ENCODE measurements at regions of chr16 and their contacts with region 1.

Region 1: DNA sequence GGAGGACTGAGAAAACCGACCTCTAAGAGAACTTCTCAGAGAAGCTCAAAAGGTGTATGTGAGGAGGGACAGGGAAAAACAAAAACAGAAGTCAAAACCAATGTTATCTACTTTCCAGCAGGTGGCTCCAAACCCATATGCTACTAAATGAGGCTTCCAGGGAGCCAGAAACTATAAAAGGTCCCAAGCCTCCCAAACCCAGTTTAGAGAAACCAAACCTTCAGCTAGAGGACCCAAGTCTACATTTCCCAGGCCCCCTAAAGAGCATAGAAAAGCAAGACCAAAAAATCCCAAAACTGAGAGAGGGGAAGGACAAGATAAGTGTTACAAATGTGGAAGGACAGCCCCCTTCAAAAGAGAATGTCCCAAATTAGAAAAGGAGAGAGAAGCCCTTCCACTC is 3.7 kb downstream of the HPR start:
- DNase-seq: peak; percentile 64
- ATAC-seq: peak; percentile 86
- H3K4me3 ChIP-seq: no peak overlapping the region
- H3K27ac ChIP-seq: no peak overlapping the region
- H3K4me1 ChIP-seq: no peaks in the 10 kb centered on the region
- H3K27me3 ChIP-seq: peaks cover 4% of the 10 kb centered on the region; the same call in 1 of the 2 replicates
- CTCF ChIP-seq: peak; percentile 70
- POLR2A ChIP-seq: no peak
- RAD21 ChIP-seq: peak; percentile 61

Region 2: DNA sequence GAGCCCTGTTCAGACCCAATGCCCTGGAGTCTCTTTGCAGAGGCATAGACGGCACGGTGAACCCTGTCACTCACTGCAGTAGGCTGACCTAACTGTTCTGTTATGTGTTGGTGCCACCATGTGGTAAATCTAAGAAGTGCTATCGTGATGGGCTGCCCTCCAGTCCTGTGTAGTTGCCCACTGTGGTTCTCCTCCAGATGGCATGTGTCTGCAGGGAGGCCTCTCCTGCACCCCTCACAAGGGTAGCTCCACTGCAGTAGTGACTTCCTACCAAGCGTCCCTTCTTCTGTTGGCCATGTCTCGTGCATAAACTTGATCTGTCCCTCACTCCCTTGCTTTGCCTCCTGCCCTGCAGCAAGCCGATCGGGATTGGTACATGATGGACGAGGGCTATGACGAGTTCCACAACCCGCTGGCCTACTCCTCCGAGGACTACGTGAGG is 32.7 kb after region 1 on chr16:
- CTCF ChIA-PET with region 1: no interaction called
- POLR2A ChIA-PET with region 1: no interaction called
- dilution Hi-C with region 1: no loop called
- in situ Hi-C with region 1: no loop called
- intact Hi-C with region 1: loop called (anchors 1 kb)
- DNase-seq: peak; percentile 49
- ATAC-seq: peak; percentile 97
- H3K4me3 ChIP-seq: no peak overlapping the region
- H3K27ac ChIP-seq: no peak overlapping the region
- H3K4me1 ChIP-seq: no peaks in the 10 kb centered on the region
- H3K27me3 ChIP-seq: no peaks in the 10 kb centered on the region
- CTCF ChIP-seq: peak; percentile 55
- POLR2A ChIP-seq: no peak
- RAD21 ChIP-seq: peak; percentile 64

Measured in IMR-90 (cell line).